PC-3 (cell line): ENCODE measurements at regions of chr11 and their contacts with region 1.

Region 1: DNA sequence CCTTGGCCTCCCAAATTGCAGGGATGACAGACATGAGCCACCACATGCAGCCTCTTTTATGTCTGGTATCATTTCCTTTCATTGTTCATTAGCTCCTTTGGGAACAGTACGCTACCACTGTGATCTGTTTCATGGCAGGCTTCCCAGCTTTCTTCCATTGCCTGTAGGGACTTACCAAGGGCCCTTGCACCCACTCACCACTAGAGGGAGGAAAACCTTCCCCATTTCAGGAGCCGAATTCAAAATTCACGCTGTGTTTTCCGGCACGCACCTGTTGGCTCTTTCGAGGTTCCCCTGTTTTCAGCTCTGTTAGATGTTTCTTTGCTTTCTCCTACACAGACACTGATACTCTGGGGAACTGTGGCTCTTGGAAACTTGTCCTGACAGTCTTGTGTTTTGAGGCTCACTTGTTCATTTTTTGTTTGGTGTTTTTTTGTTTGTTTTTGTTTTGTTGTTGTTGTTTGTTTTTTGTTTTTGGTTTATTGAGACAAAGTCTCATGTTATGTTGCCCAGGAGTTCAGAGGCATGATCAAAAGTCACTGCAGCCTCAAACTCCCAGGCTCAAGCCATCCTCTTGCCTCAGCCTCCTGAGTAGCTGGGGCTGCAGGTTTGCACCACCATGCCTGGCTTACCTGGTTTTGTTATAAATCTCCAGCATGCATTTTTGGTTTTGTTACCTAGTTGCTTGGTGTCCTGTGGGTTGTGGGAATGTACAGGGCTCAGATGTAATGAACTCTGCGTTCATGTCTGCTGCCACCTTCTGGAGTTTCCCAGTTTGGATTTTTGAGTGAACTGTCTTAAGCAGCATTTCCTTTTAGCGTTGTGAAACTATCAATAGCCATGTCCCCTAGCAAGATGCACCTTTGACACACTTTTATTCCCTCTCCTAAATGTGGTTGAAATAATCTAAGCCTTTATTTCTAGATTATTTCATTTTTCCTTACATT is 2.3 kb downstream of the KRTAP5-11 start:
- DNase-seq: peak; percentile 88
- ATAC-seq: peak; percentile 95
- H3K4me3 ChIP-seq: no peak overlapping the region
- H3K27ac ChIP-seq: no peak overlapping the region
- H3K4me1 ChIP-seq: peaks cover 14% of the 10 kb centered on the region
- H3K27me3 ChIP-seq: peaks cover 28% of the 10 kb centered on the region
- CTCF ChIP-seq: peak; percentile 64

Region 2: DNA sequence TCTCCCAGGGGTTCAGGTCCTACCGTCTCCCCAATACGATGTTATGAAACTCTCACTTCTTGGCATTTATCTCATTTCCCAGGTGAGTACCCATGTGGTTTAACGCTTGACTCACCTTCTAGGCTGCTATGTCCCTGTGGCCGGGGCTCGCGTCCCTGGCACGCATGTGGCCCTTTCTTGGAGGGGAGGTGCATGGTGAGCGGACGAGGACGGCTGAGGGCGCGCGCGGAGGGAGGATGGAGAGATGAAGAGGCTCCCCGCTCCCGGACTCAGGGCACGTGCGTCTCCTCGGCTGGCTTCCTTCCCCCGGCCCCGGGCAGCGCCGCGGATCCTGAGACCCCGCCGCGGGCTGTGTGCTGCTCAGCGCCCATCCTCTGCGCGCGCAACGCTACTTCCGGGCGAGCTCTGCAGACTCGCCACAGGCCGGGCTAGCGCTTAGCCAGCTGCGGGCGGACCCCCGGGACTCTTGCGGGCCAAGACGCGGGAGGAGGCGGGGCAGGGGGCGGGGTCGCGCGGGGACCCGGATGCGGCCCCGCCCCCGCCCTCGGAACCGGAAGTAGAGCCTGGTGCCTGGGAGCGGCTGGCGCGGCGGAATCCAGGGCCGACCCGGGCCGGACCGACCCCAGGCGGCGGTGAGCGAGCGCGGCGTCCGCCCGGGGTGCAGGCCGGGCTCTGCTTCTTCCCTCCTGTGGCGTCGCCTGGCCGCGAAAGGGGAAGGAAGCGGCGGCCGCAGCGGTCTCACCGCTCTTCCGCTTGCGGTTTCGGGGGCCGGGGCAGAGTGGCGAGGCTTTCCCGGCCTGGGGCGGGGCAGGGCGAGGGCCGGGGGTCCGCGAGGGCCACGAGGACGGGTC is 1182.1 kb before region 1 on chr11 and contains the start of gene CTTN:
- CTCF ChIA-PET with region 1: no interaction called
- POLR2A ChIA-PET with region 1: no interaction called
- intact Hi-C with region 1: no loop called
- DNase-seq: peak; percentile 88
- ATAC-seq: peak; percentile 49
- H3K4me3 ChIP-seq: peak within 1 kb of the TSS; percentile 73
- H3K27ac ChIP-seq: peak within 1 kb of the TSS; percentile 86
- H3K4me1 ChIP-seq: peaks cover 32% of the 10 kb centered on the region
- H3K27me3 ChIP-seq: no peaks in the 10 kb centered on the region
- CTCF ChIP-seq: no peak
- total RNA-seq, gene CTTN: 244 and 262 TPM in 2 replicates

Region 3: GRCh38 chr11:71373791-71374454 is 206.4 kb before region 1 on chr11:
- CTCF ChIA-PET with region 1: no interaction called
- POLR2A ChIA-PET with region 1: no interaction called
- intact Hi-C with region 1: no loop called
- DNase-seq: no peak
- ATAC-seq: no peak
- H3K4me3 ChIP-seq: no peak overlapping the region
- H3K27ac ChIP-seq: no peak overlapping the region
- H3K4me1 ChIP-seq: no peaks in the 10 kb centered on the region
- H3K27me3 ChIP-seq: peaks cover 19% of the 10 kb centered on the region; the same call in 1 of the 2 replicates
- CTCF ChIP-seq: no peak

Region 4: GRCh38 chr11:71498091-71498490 is 82.2 kb before region 1 on chr11:
- CTCF ChIA-PET with region 1: interaction called, 10 read pairs
- POLR2A ChIA-PET with region 1: no interaction called
- intact Hi-C with region 1: no loop called
- DNase-seq: no peak
- ATAC-seq: no peak
- H3K4me3 ChIP-seq: no peak overlapping the region
- H3K27ac ChIP-seq: no peak overlapping the region
- H3K4me1 ChIP-seq: peaks cover 16% of the 10 kb centered on the region; the same call in 1 of the 2 replicates
- H3K27me3 ChIP-seq: no peaks in the 10 kb centered on the region
- CTCF ChIP-seq: no peak

Region 5: DNA sequence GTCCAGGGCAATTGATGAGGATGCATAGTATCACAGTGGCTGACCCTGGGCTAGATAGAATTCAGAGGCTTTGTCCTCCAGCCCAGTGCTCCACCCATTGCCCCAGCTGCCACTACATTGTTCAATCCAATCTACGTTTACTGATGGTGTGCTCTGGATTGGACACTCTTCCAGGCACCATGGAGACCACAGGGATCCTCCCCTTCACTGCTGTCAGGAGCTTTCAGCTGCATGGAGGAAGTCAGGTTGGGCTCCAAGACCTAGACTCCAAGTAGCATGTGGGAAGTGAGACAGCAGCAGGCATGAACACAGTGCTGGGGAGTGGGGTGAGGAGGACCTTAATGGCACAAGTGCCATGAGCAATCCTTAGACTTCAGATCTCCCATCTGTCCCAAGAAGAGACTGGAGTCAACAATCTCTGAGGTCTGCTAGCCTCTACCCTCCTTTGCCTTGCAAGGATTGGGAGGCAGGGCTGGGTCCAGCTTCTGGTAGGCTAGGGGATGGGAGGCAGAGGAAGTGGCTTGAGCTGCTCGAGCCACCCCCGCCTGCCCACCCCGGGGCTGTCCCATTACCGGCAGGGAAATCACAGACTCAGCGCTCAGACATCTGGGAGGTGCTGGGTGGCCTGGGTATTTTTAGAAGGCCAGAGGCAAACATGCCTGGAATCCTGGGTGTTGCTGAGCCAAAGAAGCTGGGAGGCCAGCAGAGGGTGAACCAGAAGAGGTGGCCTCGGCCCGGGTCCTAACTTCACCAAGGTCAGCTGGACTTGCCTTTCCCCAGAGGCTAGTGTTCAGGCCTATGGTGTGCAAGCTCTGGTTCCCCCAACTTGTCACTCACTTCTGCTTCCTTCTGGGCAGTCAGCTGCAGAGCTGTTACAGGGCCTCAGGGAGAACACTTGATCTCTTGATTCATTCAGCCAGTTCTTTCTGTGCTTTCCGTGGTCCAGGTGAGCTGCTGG is 1577.0 kb after region 1 on chr11:
- CTCF ChIA-PET with region 1: no interaction called
- POLR2A ChIA-PET with region 1: no interaction called
- intact Hi-C with region 1: no loop called
- DNase-seq: no peak
- ATAC-seq: no peak
- H3K4me3 ChIP-seq: no peak overlapping the region
- H3K27ac ChIP-seq: no peak overlapping the region
- H3K4me1 ChIP-seq: no peaks in the 10 kb centered on the region
- H3K27me3 ChIP-seq: no peaks in the 10 kb centered on the region
- CTCF ChIP-seq: no peak